Activated CD4-positive, alpha-beta T cell treated with anti-CD3 and anti-CD28 coated beads, Interleukin-2, amount 10 ng/mL, durations not matched to agents 24 days and 14 days (primary cell): ENCODE measurements at regions of chr2 and their contacts with region 1.

Region 1: GRCh38 chr2:69829256-69830046 is at the start of gene GMCL1:
- DNase-seq: peak; percentile 100
- H3K4me3 Mint-ChIP-seq: peak within 1 kb of the TSS; percentile 95
- H3K27ac Mint-ChIP-seq: peak within 1 kb of the TSS; percentile 97
- H3K4me1 Mint-ChIP-seq: peaks cover 43% of the 10 kb centered on the region
- H3K27me3 Mint-ChIP-seq: no peaks in the 10 kb centered on the region
- total RNA-seq, gene GMCL1: 25.9 and 28.0 TPM in 2 replicates

Region 2: GRCh38 chr2:69386789-69387734 is 442.4 kb before region 1 on chr2 and contains the start of gene GFPT1:
- intact Hi-C with region 1: loop called (anchors 1 kb)
- DNase-seq: peak; percentile 99
- H3K4me3 Mint-ChIP-seq: peak within 1 kb of the TSS; percentile 98
- H3K27ac Mint-ChIP-seq: peak within 1 kb of the TSS; percentile 95
- H3K4me1 Mint-ChIP-seq: peaks cover 40% of the 10 kb centered on the region
- H3K27me3 Mint-ChIP-seq: no peaks in the 10 kb centered on the region
- total RNA-seq, gene GFPT1: 48.8 and 50.6 TPM in 2 replicates

Region 3: GRCh38 chr2:69770193-69771146 is 59.0 kb before region 1 on chr2:
- intact Hi-C with region 1: loop called (anchors 2 kb)
- DNase-seq: peak; percentile 80
- H3K4me3 Mint-ChIP-seq: peak overlapping the region; percentile 29
- H3K27ac Mint-ChIP-seq: peak overlapping the region; percentile 77
- H3K4me1 Mint-ChIP-seq: peaks cover 66% of the 10 kb centered on the region
- H3K27me3 Mint-ChIP-seq: no peaks in the 10 kb centered on the region

Region 4: GRCh38 chr2:69848201-69848770 is 18.8 kb after region 1 on chr2:
- intact Hi-C with region 1: no loop called
- DNase-seq: peak; percentile 45
- H3K4me3 Mint-ChIP-seq: no peak overlapping the region
- H3K27ac Mint-ChIP-seq: no peak overlapping the region
- H3K4me1 Mint-ChIP-seq: peaks cover 8% of the 10 kb centered on the region
- H3K27me3 Mint-ChIP-seq: no peaks in the 10 kb centered on the region